ENCODE measurements at regions of chr1 and their contacts with region 1.

Region 1: DNA sequence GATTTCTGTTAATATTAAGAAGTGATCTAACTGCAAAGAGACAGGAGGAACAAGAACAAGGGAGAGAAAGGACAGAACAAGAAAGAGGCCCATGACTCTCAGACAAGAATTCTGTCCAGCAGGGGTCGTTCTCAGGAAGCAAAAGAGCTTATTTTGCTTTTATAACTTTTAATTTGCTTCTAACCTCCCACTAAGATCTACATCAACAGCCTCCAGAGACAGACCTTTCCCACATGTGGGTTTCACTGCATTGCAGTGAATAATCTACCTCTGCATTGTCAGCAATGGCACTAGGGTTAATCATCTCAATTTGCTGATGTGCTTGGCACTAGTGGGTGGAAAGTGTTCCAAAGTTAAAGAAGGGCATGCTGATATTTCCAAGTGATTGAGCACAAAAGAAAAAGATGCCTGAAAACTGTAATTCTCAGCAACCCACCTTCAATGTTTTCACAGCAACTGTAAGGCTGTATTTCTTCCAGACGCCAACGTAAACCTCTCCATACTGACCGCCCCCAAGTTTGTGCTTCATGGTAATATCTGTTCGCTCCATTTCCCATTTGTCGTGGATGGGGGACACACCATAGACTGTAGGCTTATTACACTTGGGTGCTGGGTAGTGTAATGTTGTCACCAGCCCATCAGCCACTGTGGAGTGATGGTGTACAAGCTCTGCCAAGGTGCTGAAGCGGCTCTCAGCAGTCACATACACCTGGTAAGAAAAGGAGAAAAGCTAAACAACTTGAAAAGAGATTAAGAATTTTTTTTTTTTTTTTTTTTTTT is 39.5 kb downstream of the TOR3A start:
- DNase-seq: peak; percentile 28
- ATAC-seq: peak; percentile 61; the same call in 1 of the 2 replicates
- H3K4me3 ChIP-seq: no peak overlapping the region
- H3K27ac ChIP-seq: no peak overlapping the region
- H3K4me1 ChIP-seq: peaks cover 0 to 13% of the 10 kb centered on the region in 2 experiments; a peak in 1 of 4 replicates
- H3K27me3 ChIP-seq: no peaks in the 10 kb centered on the region
- CTCF ChIP-seq: peak; percentile 61 to 70 (median 66); a peak in 5 of 6 replicates
- POLR2A ChIP-seq: no peak
- RAD21 ChIP-seq: peak; percentile 84

Region 2: DNA sequence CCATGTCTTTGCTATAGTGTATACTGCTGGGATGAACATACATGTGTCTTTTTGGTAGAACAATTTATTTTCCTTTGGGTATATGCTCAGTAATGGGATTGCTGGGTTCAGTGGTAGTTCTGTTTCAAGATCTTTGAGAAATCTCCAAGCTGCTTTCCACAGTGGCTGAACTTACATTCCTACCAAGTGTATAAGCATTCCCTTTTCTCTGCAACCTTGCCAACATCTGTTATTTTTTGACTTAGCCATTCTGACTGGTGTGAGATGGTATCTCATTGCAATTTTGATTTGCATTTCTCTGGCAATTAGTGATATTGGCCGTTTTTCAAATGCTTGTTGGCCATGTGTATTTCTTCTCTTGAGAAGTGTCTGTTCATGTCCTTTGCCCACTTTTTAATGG is 213.0 kb before region 1 on chr1:
- CTCF ChIA-PET with region 1: no interaction called
- POLR2A ChIA-PET with region 1: no interaction called
- RAD21 ChIA-PET with region 1: no interaction called
- intact Hi-C with region 1: no loop called
- DNase-seq: no peak
- ATAC-seq: no peak
- H3K4me3 ChIP-seq: no peak overlapping the region
- H3K27ac ChIP-seq: no peak overlapping the region
- H3K4me1 ChIP-seq: no peaks in the 10 kb centered on the region
- H3K27me3 ChIP-seq: no peaks in the 10 kb centered on the region
- CTCF ChIP-seq: no peak
- POLR2A ChIP-seq: no peak
- RAD21 ChIP-seq: no peak

Region 3: GRCh38 chr1:178931858-178932551 is 189.3 kb before region 1 on chr1:
- CTCF ChIA-PET with region 1: no interaction called
- POLR2A ChIA-PET with region 1: no interaction called
- RAD21 ChIA-PET with region 1: no interaction called
- intact Hi-C with region 1: no loop called
- DNase-seq: no peak
- ATAC-seq: no peak
- H3K4me3 ChIP-seq: no peak overlapping the region
- H3K27ac ChIP-seq: no peak overlapping the region
- H3K4me1 ChIP-seq: no peaks in the 10 kb centered on the region
- H3K27me3 ChIP-seq: no peaks in the 10 kb centered on the region
- CTCF ChIP-seq: no peak
- POLR2A ChIP-seq: no peak
- RAD21 ChIP-seq: no peak

Region 4: DNA sequence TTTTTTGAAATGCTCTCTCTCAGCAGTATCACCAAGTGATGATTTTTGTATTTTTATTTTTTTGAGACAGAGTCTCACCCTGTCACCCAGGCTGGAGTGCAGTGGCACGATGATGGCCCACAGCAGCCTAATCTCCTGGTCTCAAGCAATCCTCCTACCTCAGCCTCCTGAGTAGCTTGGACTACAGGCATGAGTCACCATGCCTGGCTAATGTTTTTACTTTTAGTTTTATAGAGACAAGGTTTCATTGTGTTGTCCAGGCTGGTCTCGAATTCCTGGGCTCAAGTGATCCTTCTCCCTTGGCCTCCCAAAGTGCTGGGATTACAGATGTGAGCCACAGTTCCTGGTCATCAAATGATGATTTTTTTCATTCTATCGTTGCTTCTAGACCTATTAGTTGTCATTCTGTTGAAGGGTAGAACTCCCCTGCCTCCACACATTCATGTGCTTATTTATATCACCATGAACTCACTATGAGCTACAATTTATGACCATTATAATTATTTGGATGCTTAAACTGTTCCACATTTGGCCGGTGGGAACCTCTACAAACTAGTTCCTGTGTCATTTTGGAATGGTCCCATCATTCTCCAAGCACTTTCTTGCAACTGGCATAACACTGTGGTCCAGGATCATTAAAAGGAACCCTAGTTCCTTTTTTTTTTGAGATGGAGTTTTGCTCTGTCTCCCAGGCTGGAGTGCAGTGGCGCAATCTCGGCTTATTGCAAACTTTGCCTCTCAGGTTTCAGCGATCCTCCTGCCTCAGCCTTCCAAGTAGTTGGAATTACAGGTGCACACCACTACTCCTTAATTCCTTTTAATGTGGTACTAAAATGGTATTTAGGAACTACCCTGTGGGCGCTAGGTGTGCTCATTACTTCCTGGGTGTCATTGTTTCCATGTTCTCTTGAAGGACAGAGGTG is 59.7 kb before region 1 on chr1:
- CTCF ChIA-PET with region 1: no interaction called
- POLR2A ChIA-PET with region 1: no interaction called
- RAD21 ChIA-PET with region 1: no interaction called
- intact Hi-C with region 1: no loop called
- DNase-seq: no peak
- ATAC-seq: no peak
- H3K4me3 ChIP-seq: no peak overlapping the region
- H3K27ac ChIP-seq: no peak overlapping the region
- H3K4me1 ChIP-seq: peaks cover 0 to 11% of the 10 kb centered on the region in 2 experiments; a peak in 1 of 4 replicates
- H3K27me3 ChIP-seq: no peaks in the 10 kb centered on the region
- CTCF ChIP-seq: no peak
- POLR2A ChIP-seq: no peak
- RAD21 ChIP-seq: no peak

Region 5: GRCh38 chr1:179094823-179095222 is 26.5 kb before region 1 on chr1:
- CTCF ChIA-PET with region 1: no interaction called
- POLR2A ChIA-PET with region 1: no interaction called
- RAD21 ChIA-PET with region 1: no interaction called
- intact Hi-C with region 1: no loop called
- DNase-seq: no peak
- ATAC-seq: no peak
- H3K4me3 ChIP-seq: no peak overlapping the region
- H3K27ac ChIP-seq: no peak overlapping the region
- H3K4me1 ChIP-seq: no peaks in the 10 kb centered on the region
- H3K27me3 ChIP-seq: no peaks in the 10 kb centered on the region
- CTCF ChIP-seq: no peak
- POLR2A ChIP-seq: no peak
- RAD21 ChIP-seq: no peak

Region 6: GRCh38 chr1:179105350-179105749 is 16.0 kb before region 1 on chr1:
- CTCF ChIA-PET with region 1: interaction called, 13 read pairs
- POLR2A ChIA-PET with region 1: no interaction called
- RAD21 ChIA-PET with region 1: no interaction called
- intact Hi-C with region 1: no loop called
- DNase-seq: no peak
- ATAC-seq: peak; percentile 89
- H3K4me3 ChIP-seq: no peak overlapping the region
- H3K27ac ChIP-seq: no peak overlapping the region
- H3K4me1 ChIP-seq: no peaks in the 10 kb centered on the region
- H3K27me3 ChIP-seq: no peaks in the 10 kb centered on the region
- CTCF ChIP-seq: peak; percentile 59 to 68 (median 61); a peak in 5 of 6 replicates
- POLR2A ChIP-seq: no peak
- RAD21 ChIP-seq: peak; percentile 49

Measured in HCT116 (cell line).